HepG2 (cell line): ENCODE measurements at regions of chr20 and their contacts with region 1.

Region 1: DNA sequence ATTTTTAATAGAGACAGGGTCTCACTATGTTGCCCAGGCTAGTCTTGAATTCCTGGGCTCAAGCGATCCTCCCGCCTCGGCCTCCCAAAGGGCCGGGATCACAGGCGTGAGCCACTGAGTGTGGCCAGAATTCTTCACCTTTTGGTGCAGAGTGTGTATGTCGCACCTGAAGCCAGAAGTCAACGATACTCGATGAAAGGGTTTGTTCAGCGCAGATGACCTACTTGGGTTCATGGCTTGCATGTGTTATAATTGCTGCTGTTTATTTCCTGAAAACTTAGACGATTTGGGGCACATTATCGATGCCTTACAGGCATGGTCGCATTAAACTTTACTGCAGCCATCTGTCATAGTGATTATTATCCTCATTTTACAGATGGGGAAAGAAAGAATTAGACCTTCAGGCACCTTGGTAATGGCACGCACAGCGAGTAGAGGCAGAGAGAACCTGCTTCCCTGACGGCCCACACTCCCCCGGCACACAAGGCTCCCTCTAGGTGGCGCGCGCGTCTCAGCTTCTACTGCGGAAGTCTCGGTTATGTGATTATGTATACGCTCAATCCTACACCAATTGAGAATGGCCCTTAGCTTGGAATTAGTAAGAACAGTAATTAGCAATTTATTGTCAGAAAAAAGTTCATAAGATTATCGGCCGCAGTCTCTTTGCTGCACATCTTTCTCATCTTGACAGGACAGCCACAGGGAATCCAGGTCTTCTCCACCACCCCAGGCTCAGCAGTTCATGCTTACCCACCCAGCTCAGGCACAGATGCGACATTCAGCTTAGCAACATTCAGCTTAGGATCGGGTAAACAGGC is 212.8 kb upstream of the PROKR2 start:
- DNase-seq: peak; percentile 84
- ATAC-seq: peak; percentile 94
- H3K4me3 ChIP-seq: peak overlapping the region; percentile 20 to 62 (median 46)
- H3K27ac ChIP-seq: peak overlapping the region; percentile 5
- H3K4me1 ChIP-seq: peaks cover 25% of the 10 kb centered on the region; the same call in 1 of the 2 replicates
- H3K27me3 ChIP-seq: peaks cover 3 to 14% of the 10 kb centered on the region in 2 experiments; a peak in 3 of 5 replicates
- CTCF ChIP-seq: peak; percentile 99
- EP300 ChIP-seq: no peak
- POLR2A ChIP-seq: no peak
- RAD21 ChIP-seq: peak; percentile 85

Region 2: GRCh38 chr20:5486377-5487054 is 43.0 kb before region 1 on chr20:
- CTCF ChIA-PET with region 1: no interaction called
- POLR2A ChIA-PET with region 1: no interaction called
- in situ Hi-C with region 1: no loop called
- intact Hi-C with region 1: no loop called
- DNase-seq: no peak
- ATAC-seq: no peak
- H3K4me3 ChIP-seq: no peak overlapping the region
- H3K27ac ChIP-seq: no peak overlapping the region
- H3K4me1 ChIP-seq: no peaks in the 10 kb centered on the region
- H3K27me3 ChIP-seq: peaks cover 19 to 67% of the 10 kb centered on the region in 2 experiments
- CTCF ChIP-seq: no peak
- EP300 ChIP-seq: no peak
- POLR2A ChIP-seq: no peak
- RAD21 ChIP-seq: no peak

Region 3: DNA sequence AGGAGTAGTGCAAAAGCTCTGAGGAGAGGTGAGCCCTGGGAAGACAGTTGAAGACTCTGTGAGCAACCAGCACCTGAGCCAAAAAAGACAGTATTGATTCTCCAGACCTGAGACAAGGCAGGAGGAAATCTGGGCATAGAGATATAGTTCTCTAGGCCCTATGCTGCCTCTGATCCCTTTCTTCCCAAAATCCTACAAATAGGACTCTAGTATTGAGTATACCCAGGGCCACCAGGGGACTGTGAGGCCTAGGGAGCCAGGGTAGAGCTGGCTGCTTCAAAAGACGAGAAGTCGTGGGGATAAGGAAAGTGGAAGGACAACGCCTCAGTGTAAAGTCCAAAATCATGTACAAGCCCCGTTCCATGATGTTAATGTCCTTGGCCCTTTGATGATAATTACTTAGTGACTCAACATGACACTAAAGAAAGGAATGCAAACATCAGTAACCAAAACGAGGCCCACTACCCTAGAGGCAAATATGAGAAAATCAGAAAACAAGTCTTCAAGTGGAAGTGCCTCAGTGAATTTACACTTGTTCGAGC is 15.5 kb before region 1 on chr20:
- CTCF ChIA-PET with region 1: interaction called, 6 read pairs
- POLR2A ChIA-PET with region 1: interaction called, 6 read pairs
- in situ Hi-C with region 1: no loop called
- intact Hi-C with region 1: loop called (anchors 1 kb)
- DNase-seq: peak; percentile 99
- ATAC-seq: peak; percentile 93
- H3K4me3 ChIP-seq: peak overlapping the region in 1 of 3 experiments; percentile 35; a peak in 1 of 6 replicates
- H3K27ac ChIP-seq: peak overlapping the region; percentile 25
- H3K4me1 ChIP-seq: peaks cover 19% of the 10 kb centered on the region
- H3K27me3 ChIP-seq: peaks cover 0 to 11% of the 10 kb centered on the region in 2 experiments; a peak in 1 of 5 replicates
- CTCF ChIP-seq: peak; percentile 41
- EP300 ChIP-seq: peak; percentile 84 to 99
- POLR2A ChIP-seq: no peak
- RAD21 ChIP-seq: no peak

Region 4: DNA sequence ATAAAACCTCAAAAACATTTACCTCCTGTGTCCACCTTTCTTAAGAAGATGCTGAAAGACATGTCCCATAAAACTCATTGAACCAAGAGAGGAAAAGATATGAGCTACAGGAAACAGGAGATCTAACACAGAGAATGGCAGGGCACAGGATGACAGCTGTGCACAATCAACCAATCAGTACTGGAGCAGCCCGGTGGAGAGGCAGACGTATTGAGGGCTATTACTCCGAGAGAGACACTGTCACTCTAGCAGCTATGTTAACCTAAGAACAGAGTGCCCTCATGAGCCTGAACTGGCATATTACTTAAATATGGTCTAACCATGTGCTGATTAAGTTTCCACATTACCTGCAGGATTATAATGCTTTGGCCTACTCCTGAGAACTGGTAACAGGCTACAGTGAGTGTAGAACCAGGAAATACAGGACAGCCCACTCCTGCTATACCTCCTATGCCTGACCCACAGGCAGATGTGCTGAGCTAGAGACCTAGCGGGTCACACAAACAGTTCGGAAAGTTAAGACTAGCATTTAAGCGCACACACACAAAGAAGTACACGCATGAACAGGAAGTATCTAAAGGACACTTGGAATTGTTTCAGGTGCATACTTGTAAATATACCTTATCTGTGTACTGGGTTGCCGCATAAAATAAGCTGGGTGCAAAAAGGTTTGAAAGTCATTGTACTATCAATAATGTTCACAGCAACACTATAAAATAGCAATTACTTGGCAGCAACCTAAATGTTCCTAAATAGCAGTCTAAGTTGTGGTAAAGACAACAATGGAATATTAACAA is 21.4 kb after region 1 on chr20:
- CTCF ChIA-PET with region 1: no interaction called
- POLR2A ChIA-PET with region 1: no interaction called
- in situ Hi-C with region 1: no loop called
- intact Hi-C with region 1: no loop called
- DNase-seq: no peak
- ATAC-seq: peak; percentile 57
- H3K4me3 ChIP-seq: no peak overlapping the region
- H3K27ac ChIP-seq: no peak overlapping the region
- H3K4me1 ChIP-seq: peaks cover under 1% of the 10 kb centered on the region; the same call in 1 of the 2 replicates
- H3K27me3 ChIP-seq: no peaks in the 10 kb centered on the region
- CTCF ChIP-seq: no peak
- EP300 ChIP-seq: no peak
- POLR2A ChIP-seq: no peak
- RAD21 ChIP-seq: no peak

Region 5: DNA sequence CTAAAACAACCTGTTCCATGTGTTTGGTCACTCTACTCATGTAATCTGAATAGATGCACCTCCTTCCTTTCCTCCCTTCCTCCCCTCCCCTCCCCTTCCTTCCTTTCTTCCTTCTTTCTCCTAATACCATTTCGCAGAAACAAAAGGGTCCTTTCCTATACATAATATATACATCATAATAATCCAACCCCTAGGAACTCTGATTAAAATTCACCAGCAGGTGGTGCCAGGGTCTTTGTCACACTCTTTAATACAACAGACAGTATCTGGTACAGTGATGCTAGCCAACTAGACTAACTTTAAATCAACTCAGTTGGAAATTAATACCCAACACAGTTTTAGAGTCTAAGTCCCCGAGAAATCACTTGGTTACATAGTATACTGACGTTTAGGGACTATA is 39.5 kb after region 1 on chr20:
- CTCF ChIA-PET with region 1: no interaction called
- POLR2A ChIA-PET with region 1: no interaction called
- in situ Hi-C with region 1: no loop called
- intact Hi-C with region 1: loop called (anchors 1 kb)
- DNase-seq: peak; percentile 71
- ATAC-seq: peak; percentile 94
- H3K4me3 ChIP-seq: no peak overlapping the region
- H3K27ac ChIP-seq: no peak overlapping the region
- H3K4me1 ChIP-seq: no peaks in the 10 kb centered on the region
- H3K27me3 ChIP-seq: no peaks in the 10 kb centered on the region
- CTCF ChIP-seq: peak; percentile 73
- EP300 ChIP-seq: no peak
- POLR2A ChIP-seq: no peak
- RAD21 ChIP-seq: peak; percentile 69

Region 6: GRCh38 chr20:5933802-5934436 is 404.4 kb after region 1 on chr20:
- CTCF ChIA-PET with region 1: interaction called, 27 read pairs
- POLR2A ChIA-PET with region 1: no interaction called
- in situ Hi-C with region 1: loop called (anchors 5 kb)
- intact Hi-C with region 1: loop called (anchors 1 kb)
- DNase-seq: peak; percentile 71
- ATAC-seq: peak; percentile 92
- H3K4me3 ChIP-seq: no peak overlapping the region
- H3K27ac ChIP-seq: no peak overlapping the region
- H3K4me1 ChIP-seq: peaks cover 9% of the 10 kb centered on the region; the same call in 1 of the 2 replicates
- H3K27me3 ChIP-seq: no peaks in the 10 kb centered on the region
- CTCF ChIP-seq: peak; percentile 85
- EP300 ChIP-seq: no peak
- POLR2A ChIP-seq: no peak
- RAD21 ChIP-seq: peak; percentile 64; the same call in 1 of the 2 replicates

Region 7: GRCh38 chr20:6074145-6074561 is 544.6 kb after region 1 on chr20:
- CTCF ChIA-PET with region 1: interaction called, 84 read pairs
- POLR2A ChIA-PET with region 1: interaction called, 4 read pairs
- in situ Hi-C with region 1: loop called (anchors 5 kb)
- intact Hi-C with region 1: loop called (anchors 1 kb)
- DNase-seq: peak; percentile 88
- ATAC-seq: peak; percentile 99
- H3K4me3 ChIP-seq: no peak overlapping the region
- H3K27ac ChIP-seq: peak overlapping the region; percentile 37
- H3K4me1 ChIP-seq: peaks cover 34% of the 10 kb centered on the region
- H3K27me3 ChIP-seq: no peaks in the 10 kb centered on the region; a peak in 1 of 5 replicates
- CTCF ChIP-seq: peak; percentile 80
- EP300 ChIP-seq: no peak
- POLR2A ChIP-seq: no peak
- RAD21 ChIP-seq: peak; percentile 75; the same call in 1 of the 2 replicates

Region 8: GRCh38 chr20:7375905-7376304 is 1846.4 kb after region 1 on chr20:
- CTCF ChIA-PET with region 1: no interaction called
- POLR2A ChIA-PET with region 1: no interaction called
- in situ Hi-C with region 1: no loop called
- intact Hi-C with region 1: loop called (anchors 10 kb)
- DNase-seq: peak; percentile 29
- ATAC-seq: no peak
- H3K4me3 ChIP-seq: no peak overlapping the region
- H3K27ac ChIP-seq: no peak overlapping the region
- H3K4me1 ChIP-seq: no peaks in the 10 kb centered on the region
- H3K27me3 ChIP-seq: no peaks in the 10 kb centered on the region
- CTCF ChIP-seq: 0 out of 2 replicates have a peak, but pooled peaks have one; percentile 29
- EP300 ChIP-seq: no peak
- POLR2A ChIP-seq: no peak
- RAD21 ChIP-seq: no peak